Adrenal gland (tissue), 19 donors: ENCODE measurements at regions of chr12 and their contacts with region 1.

Region 1: GRCh38 chr12:100234598-100235304 is 32.1 kb downstream of the DEPDC4 start:
- DNase-seq: peak in 2 of 7 donors; percentile 24 to 27
- H3K4me3 ChIP-seq: peak overlapping the region in 1 of 4 donors; percentile 21
- H3K27ac ChIP-seq: peak overlapping the region in 3 of 5 donors; percentile 45 to 75 (median 65)
- H3K4me1 ChIP-seq: peaks cover 0 to 5% of the 10 kb centered on the region in 2 donors
- H3K27me3 ChIP-seq: no peaks in the 10 kb centered on the region
- CTCF ChIP-seq: peak; percentile 59 to 79 (median 76)
- POLR2A ChIP-seq: no peak

Region 2: GRCh38 chr12:100199347-100200149 is 35.2 kb before region 1 on chr12:
- intact Hi-C with region 1: no loop called
- DNase-seq: peak; percentile 75 to 87 (median 84)
- H3K4me3 ChIP-seq: peak overlapping the region; percentile 49 to 93 (median 79)
- H3K27ac ChIP-seq: peak overlapping the region; percentile 42 to 72 (median 56)
- H3K4me1 ChIP-seq: peaks cover 5 to 21% of the 10 kb centered on the region in 2 donors
- H3K27me3 ChIP-seq: no peaks in the 10 kb centered on the region
- CTCF ChIP-seq: no peak
- POLR2A ChIP-seq: no peak

Region 3: GRCh38 chr12:100329800-100330199 is 95.0 kb after region 1 on chr12:
- intact Hi-C with region 1: loop called in 1 of 2 experiments (anchors 10 kb)
- DNase-seq: no peak
- H3K4me3 ChIP-seq: no peak overlapping the region
- H3K27ac ChIP-seq: no peak overlapping the region
- H3K4me1 ChIP-seq: no peaks in the 10 kb centered on the region
- H3K27me3 ChIP-seq: no peaks in the 10 kb centered on the region
- CTCF ChIP-seq: no peak
- POLR2A ChIP-seq: no peak

Region 4: DNA sequence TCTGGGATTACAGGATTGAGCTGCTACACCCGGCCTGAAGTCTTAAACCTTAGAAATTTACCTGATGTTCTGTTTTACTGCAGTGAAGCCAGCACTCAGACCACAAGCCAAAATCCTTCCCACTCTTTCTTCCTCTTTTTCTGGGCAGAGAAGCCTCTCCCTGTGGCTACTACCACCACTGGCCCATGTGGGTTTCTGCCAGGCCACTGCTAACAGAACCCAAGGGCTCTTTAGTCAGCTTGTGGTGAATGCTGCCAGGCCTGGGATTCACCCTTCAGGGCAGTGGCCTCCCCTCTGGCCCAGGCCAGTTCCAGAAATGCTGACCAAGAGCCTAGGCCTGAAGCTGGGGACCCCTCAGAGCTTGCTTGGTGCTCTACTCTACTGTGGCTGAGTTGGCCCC is 374.0 kb after region 1 on chr12:
- intact Hi-C with region 1: no loop called
- DNase-seq: peak in 6 of 7 donors; percentile 19 to 54 (median 34)
- H3K4me3 ChIP-seq: no peak overlapping the region
- H3K27ac ChIP-seq: no peak overlapping the region
- H3K4me1 ChIP-seq: no peaks in the 10 kb centered on the region
- H3K27me3 ChIP-seq: no peaks in the 10 kb centered on the region
- CTCF ChIP-seq: no peak
- POLR2A ChIP-seq: no peak

Region 5: DNA sequence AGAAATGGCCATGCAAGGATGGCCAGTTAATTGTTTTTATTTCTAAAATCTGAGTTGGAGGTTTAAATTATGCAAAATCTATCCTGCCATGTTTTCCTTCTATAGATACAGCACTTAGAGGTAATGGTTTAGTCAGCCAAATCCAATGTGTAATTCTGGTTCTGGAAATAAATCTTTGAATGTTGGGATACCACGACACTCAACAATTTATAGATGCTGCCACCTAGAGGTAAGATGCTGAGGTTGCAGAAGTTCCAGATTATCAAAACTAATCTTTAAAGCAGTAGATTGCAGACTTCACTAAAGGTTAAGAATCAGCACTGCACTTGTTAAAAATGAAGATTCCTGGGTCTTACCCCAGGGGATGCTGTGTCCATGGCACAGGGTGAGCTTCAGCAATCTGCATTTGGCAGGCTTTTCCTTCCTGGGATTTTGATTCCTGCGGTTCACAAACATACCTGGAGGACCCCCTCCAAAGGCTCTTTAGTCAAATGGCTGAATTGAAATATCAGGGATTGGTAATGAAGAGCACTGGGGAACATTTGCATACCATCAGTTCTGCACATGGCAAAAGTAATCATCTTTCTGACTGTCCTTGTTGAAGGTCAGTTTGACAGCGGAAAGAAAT is 506.4 kb after region 1 on chr12:
- intact Hi-C with region 1: loop called in 1 of 2 experiments (anchors 10 kb)
- DNase-seq: peak in 3 of 7 donors; percentile 20 to 54 (median 25)
- H3K4me3 ChIP-seq: no peak overlapping the region
- H3K27ac ChIP-seq: no peak overlapping the region
- H3K4me1 ChIP-seq: no peaks in the 10 kb centered on the region
- H3K27me3 ChIP-seq: no peaks in the 10 kb centered on the region
- CTCF ChIP-seq: peak; percentile 36 to 70 (median 48)
- POLR2A ChIP-seq: no peak

Region 6: GRCh38 chr12:100767950-100768349 is 533.2 kb after region 1 on chr12:
- intact Hi-C with region 1: no loop called
- DNase-seq: peak in 1 of 7 donors; percentile 1
- H3K4me3 ChIP-seq: no peak overlapping the region
- H3K27ac ChIP-seq: no peak overlapping the region
- H3K4me1 ChIP-seq: no peaks in the 10 kb centered on the region
- H3K27me3 ChIP-seq: no peaks in the 10 kb centered on the region
- CTCF ChIP-seq: no peak
- POLR2A ChIP-seq: no peak